ENCODE measurements at regions of chr5 and their contacts with region 1.

Region 1: DNA sequence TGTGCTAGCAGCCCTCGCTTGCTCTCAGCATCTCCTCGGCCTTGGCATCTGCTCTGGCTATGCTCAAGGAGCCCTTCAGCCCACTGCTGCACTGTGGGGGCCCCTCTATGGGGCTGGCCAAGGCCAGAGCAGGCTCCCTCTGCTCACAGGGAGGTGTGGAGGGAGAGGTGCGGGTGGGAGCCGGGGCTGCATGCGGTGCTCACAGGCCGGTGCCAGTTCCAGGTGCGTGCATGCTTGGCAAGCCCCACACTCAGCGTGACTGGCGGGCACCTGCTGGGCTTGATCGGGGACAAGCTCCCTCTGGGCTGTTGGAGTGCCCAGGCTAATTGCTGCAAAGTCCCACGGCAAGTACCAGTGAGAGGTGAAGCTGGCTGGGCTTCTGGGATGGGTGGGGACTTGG is 170.5 kb downstream of the TRIM36 start:
- DNase-seq: no peak
- ATAC-seq: no peak
- H3K4me3 ChIP-seq: no peak overlapping the region
- H3K4me3 Mint-ChIP-seq: no peak overlapping the region
- H3K27ac ChIP-seq: no peak overlapping the region
- H3K27ac Mint-ChIP-seq: no peak overlapping the region
- H3K4me1 ChIP-seq: no peaks in the 10 kb centered on the region
- H3K4me1 Mint-ChIP-seq: no peaks in the 10 kb centered on the region
- H3K27me3 ChIP-seq: no peaks in the 10 kb centered on the region
- H3K27me3 Mint-ChIP-seq: no peaks in the 10 kb centered on the region
- CTCF ChIP-seq: no peak

Region 2: DNA sequence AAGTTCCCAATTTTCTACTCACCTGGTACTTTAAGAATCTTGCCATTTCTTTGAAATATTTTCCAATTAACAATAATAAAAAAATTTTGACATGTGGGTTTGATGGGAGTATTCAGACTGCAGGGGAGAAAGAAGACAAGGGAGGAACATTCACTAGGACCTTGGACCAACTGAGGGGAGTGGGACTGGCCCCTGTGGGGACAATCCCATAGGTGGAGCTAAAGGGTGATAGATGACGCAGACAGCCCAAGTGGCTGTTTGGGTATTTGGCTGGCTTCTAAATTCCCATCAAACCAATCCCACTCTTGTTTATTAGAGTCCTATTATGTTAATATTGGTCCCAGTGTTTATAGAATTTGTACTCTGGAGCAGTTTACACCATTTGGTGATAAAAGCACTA is 572.0 kb before region 1 on chr5:
- CTCF ChIA-PET with region 1: no interaction called
- POLR2A ChIA-PET with region 1: no interaction called
- intact Hi-C with region 1: no loop called
- DNase-seq: no peak
- ATAC-seq: no peak
- H3K4me3 ChIP-seq: no peak overlapping the region
- H3K4me3 Mint-ChIP-seq: no peak overlapping the region
- H3K27ac ChIP-seq: no peak overlapping the region
- H3K27ac Mint-ChIP-seq: no peak overlapping the region
- H3K4me1 ChIP-seq: no peaks in the 10 kb centered on the region
- H3K4me1 Mint-ChIP-seq: no peaks in the 10 kb centered on the region
- H3K27me3 ChIP-seq: no peaks in the 10 kb centered on the region
- H3K27me3 Mint-ChIP-seq: no peaks in the 10 kb centered on the region
- CTCF ChIP-seq: no peak

Region 3: GRCh38 chr5:114988096-114988495 is 11.1 kb before region 1 on chr5:
- CTCF ChIA-PET with region 1: no interaction called
- POLR2A ChIA-PET with region 1: no interaction called
- intact Hi-C with region 1: loop called in 1 of 2 experiments (anchors 1 kb)
- DNase-seq: no peak
- ATAC-seq: no peak
- H3K4me3 ChIP-seq: no peak overlapping the region
- H3K4me3 Mint-ChIP-seq: no peak overlapping the region
- H3K27ac ChIP-seq: no peak overlapping the region
- H3K27ac Mint-ChIP-seq: no peak overlapping the region
- H3K4me1 ChIP-seq: no peaks in the 10 kb centered on the region
- H3K4me1 Mint-ChIP-seq: no peaks in the 10 kb centered on the region
- H3K27me3 ChIP-seq: no peaks in the 10 kb centered on the region
- H3K27me3 Mint-ChIP-seq: no peaks in the 10 kb centered on the region
- CTCF ChIP-seq: no peak

Measured in CD4-positive, alpha-beta T cell (primary cell).